ENCODE measurements at regions of chr22 and their contacts with region 1.

Region 1: GRCh38 chr22:25081409-25081824 is 118.2 kb upstream of the CRYBB3 start:
- DNase-seq: peak in 1 of 2 experiments; percentile 66
- H3K4me3 ChIP-seq: no peak overlapping the region
- H3K27ac ChIP-seq: no peak overlapping the region
- H3K4me1 ChIP-seq: peaks cover 0 to 3% (median 0%) of the 10 kb centered on the region in 4 experiments; a peak in 2 of 7 replicates
- H3K27me3 ChIP-seq: no peaks in the 10 kb centered on the region
- CTCF ChIP-seq: peak; percentile 69 to 79 (median 77)
- EP300 ChIP-seq: no peak
- POLR2A ChIP-seq: no peak
- RAD21 ChIP-seq: peak; percentile 89 to 90

Region 2: DNA sequence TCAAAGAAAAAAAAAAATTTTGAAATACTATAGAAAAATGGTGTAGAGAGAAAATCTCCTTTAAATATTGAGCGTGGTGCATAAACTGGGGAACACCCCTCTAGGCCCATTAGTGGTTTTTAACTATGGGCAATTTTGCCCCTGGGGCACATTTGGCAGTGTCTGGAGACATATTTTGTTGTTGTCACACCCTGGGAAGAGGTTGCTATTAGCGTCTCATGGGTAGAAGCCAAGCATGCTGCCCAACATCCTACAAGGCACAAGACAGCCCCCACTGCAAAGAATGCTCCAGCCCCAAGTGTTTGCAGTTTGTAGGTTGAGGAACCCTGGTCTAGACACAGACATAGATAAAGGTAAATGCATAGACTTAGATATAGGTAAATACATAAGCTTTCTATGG is 36.3 kb before region 1 on chr22:
- CTCF ChIA-PET with region 1: no interaction called
- POLR2A ChIA-PET with region 1: no interaction called
- DNase-seq: no peak
- H3K4me3 ChIP-seq: no peak overlapping the region
- H3K27ac ChIP-seq: no peak overlapping the region
- H3K4me1 ChIP-seq: no peaks in the 10 kb centered on the region
- H3K27me3 ChIP-seq: no peaks in the 10 kb centered on the region
- CTCF ChIP-seq: no peak
- EP300 ChIP-seq: no peak
- POLR2A ChIP-seq: no peak
- RAD21 ChIP-seq: no peak

Region 3: GRCh38 chr22:25067851-25068421 is 13.5 kb before region 1 on chr22:
- CTCF ChIA-PET with region 1: interaction called, 24 read pairs
- POLR2A ChIA-PET with region 1: no interaction called
- DNase-seq: no peak
- H3K4me3 ChIP-seq: no peak overlapping the region
- H3K27ac ChIP-seq: no peak overlapping the region
- H3K4me1 ChIP-seq: no peaks in the 10 kb centered on the region; a peak in 2 of 7 replicates
- H3K27me3 ChIP-seq: no peaks in the 10 kb centered on the region
- CTCF ChIP-seq: no peak
- EP300 ChIP-seq: no peak
- POLR2A ChIP-seq: no peak
- RAD21 ChIP-seq: no peak

Region 4: GRCh38 chr22:25094579-25094978 is 13.2 kb after region 1 on chr22:
- CTCF ChIA-PET with region 1: interaction called, 14 read pairs
- POLR2A ChIA-PET with region 1: interaction called, 3 read pairs
- DNase-seq: no peak
- H3K4me3 ChIP-seq: no peak overlapping the region
- H3K27ac ChIP-seq: no peak overlapping the region
- H3K4me1 ChIP-seq: peaks cover 0 to 8% (median 4%) of the 10 kb centered on the region in 4 experiments; a peak in 5 of 7 replicates
- H3K27me3 ChIP-seq: no peaks in the 10 kb centered on the region
- CTCF ChIP-seq: no peak
- EP300 ChIP-seq: no peak
- POLR2A ChIP-seq: no peak
- RAD21 ChIP-seq: no peak

Region 5: GRCh38 chr22:25172153-25172552 is 90.7 kb after region 1 on chr22:
- CTCF ChIA-PET with region 1: interaction called, 37 read pairs
- POLR2A ChIA-PET with region 1: no interaction called
- DNase-seq: no peak
- H3K4me3 ChIP-seq: no peak overlapping the region
- H3K27ac ChIP-seq: no peak overlapping the region
- H3K4me1 ChIP-seq: 0 out of 7 replicates have a peak, but pooled peaks cover 0 to 4% (median 0%) of the 10 kb centered on the region in 4 experiments
- H3K27me3 ChIP-seq: no peaks in the 10 kb centered on the region
- CTCF ChIP-seq: peak; percentile 63 to 67 (median 64)
- EP300 ChIP-seq: no peak
- POLR2A ChIP-seq: no peak
- RAD21 ChIP-seq: peak; percentile 71 to 77

Region 6: GRCh38 chr22:25202290-25202921 is 121.0 kb after region 1 on chr22:
- CTCF ChIA-PET with region 1: interaction called, 43 read pairs
- POLR2A ChIA-PET with region 1: no interaction called
- DNase-seq: peak; percentile 54 to 89
- H3K4me3 ChIP-seq: no peak overlapping the region
- H3K27ac ChIP-seq: no peak overlapping the region
- H3K4me1 ChIP-seq: peaks cover 0 to 2% (median 0%) of the 10 kb centered on the region in 4 experiments; a peak in 3 of 7 replicates
- H3K27me3 ChIP-seq: no peaks in the 10 kb centered on the region
- CTCF ChIP-seq: peak; percentile 83 to 94 (median 91)
- EP300 ChIP-seq: no peak
- POLR2A ChIP-seq: no peak
- RAD21 ChIP-seq: peak; percentile 89 to 96